Calu3 (cell line): ENCODE measurements at regions of chr12 and their contacts with region 1.

Region 1: DNA sequence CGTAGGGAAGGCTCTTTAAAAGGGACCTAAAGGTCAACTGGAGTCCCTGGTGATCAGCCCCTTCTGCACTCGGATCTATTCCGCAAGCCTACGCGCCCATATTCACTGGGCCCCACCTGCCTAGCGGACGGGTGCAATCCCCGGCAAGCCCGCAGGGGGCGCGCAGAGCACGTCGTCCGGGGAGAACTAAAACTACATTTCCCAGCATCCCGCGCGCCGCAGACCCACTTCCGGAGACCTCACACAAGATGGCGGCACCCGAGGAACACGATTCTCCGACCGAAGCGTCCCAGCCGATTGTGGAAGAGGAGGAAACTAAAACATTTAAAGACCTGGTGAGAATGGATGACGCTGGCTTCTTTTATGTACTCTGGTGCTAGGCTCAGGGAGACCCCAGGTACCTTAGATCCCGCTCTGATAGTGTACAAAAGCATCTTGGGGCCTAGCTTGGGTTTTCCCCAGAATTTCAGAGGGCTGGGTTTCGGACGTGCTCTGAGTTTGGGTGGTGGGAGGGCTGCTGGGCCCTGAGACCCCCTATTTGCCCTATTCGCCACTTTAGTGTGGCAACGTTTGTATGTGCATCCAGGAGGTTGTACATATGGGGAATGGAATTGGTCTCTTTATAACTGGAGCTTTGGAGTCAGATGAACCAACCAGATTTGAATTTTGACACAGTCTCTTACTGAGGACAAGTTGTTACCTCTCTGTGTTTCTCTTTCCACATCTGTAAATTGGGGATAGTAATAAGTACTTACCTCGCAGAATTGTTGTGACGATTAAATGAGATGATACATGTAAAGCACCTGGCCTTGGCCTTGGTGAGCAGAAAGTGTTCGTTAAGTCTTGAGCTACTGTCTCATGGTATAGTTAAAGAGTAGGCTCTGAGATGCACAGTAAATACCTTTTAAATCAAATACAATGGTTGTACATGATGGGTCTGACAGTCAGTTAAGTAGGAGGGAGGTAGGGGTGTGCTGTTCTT is at the start of gene DDX47:
- DNase-seq: peak; percentile 98
- H3K4me3 Mint-ChIP-seq: peak within 1 kb of the TSS; percentile 88
- H3K27ac Mint-ChIP-seq: peak within 1 kb of the TSS; percentile 95
- H3K4me1 Mint-ChIP-seq: peaks cover 56% of the 10 kb centered on the region
- H3K27me3 Mint-ChIP-seq: no peaks in the 10 kb centered on the region
- CTCF ChIP-seq: peak; percentile 92
- total RNA-seq, gene DDX47: 60.2 and 60.5 TPM in 2 replicates

Region 2: GRCh38 chr12:12770262-12770661 is 43.1 kb before region 1 on chr12:
- CTCF ChIA-PET with region 1: no interaction called
- intact Hi-C with region 1: no loop called
- DNase-seq: no peak
- H3K4me3 Mint-ChIP-seq: no peak overlapping the region
- H3K27ac Mint-ChIP-seq: no peak overlapping the region
- H3K4me1 Mint-ChIP-seq: no peaks in the 10 kb centered on the region
- H3K27me3 Mint-ChIP-seq: no peaks in the 10 kb centered on the region
- CTCF ChIP-seq: no peak

Region 3: DNA sequence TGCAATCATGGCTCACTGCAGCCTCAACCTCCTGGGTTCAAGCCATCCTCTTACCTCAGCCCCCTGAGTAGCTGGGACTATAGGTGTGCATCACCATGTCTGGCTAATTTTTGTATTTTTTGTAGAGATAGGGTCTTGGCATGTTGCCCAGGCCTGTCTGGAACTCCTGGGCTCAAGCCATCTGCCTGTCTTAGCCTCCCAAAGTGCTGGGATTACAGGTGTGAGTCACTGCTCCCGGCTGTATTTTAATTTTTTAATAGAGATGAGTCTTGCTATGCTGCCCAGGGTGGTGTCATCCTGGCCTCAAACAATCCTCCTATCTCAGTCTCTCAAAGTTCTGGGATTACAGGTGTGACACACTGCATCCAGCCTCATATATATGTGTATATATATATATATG is 46.3 kb after region 1 on chr12:
- CTCF ChIA-PET with region 1: no interaction called
- intact Hi-C with region 1: no loop called
- DNase-seq: no peak
- H3K4me3 Mint-ChIP-seq: no peak overlapping the region
- H3K27ac Mint-ChIP-seq: peak overlapping the region; percentile 19
- H3K4me1 Mint-ChIP-seq: peaks cover 8% of the 10 kb centered on the region
- H3K27me3 Mint-ChIP-seq: no peaks in the 10 kb centered on the region
- CTCF ChIP-seq: no peak

Region 4: GRCh38 chr12:12983420-12984035 is 170.1 kb after region 1 on chr12:
- CTCF ChIA-PET with region 1: no interaction called
- intact Hi-C with region 1: loop called (anchors 5 kb)
- DNase-seq: peak; percentile 32
- H3K4me3 Mint-ChIP-seq: no peak overlapping the region
- H3K27ac Mint-ChIP-seq: no peak overlapping the region
- H3K4me1 Mint-ChIP-seq: no peaks in the 10 kb centered on the region
- H3K27me3 Mint-ChIP-seq: no peaks in the 10 kb centered on the region
- CTCF ChIP-seq: peak; percentile 25

Region 5: GRCh38 chr12:13008741-13009380 is 195.4 kb after region 1 on chr12:
- CTCF ChIA-PET with region 1: no interaction called
- intact Hi-C with region 1: no loop called
- DNase-seq: no peak
- H3K4me3 Mint-ChIP-seq: no peak overlapping the region
- H3K27ac Mint-ChIP-seq: no peak overlapping the region
- H3K4me1 Mint-ChIP-seq: peaks cover 18% of the 10 kb centered on the region
- H3K27me3 Mint-ChIP-seq: peaks cover 98% of the 10 kb centered on the region
- CTCF ChIP-seq: no peak